Prostate gland (tissue), 2 donors: ENCODE measurements at regions of chrX and their contacts with region 1.

Region 1: GRCh38 chrX:9475984-9476383 is 11.1 kb downstream of the TBL1X start:
- DNase-seq: no peak
- H3K4me3 ChIP-seq: no peak overlapping the region
- H3K27ac ChIP-seq: no peak overlapping the region
- H3K4me1 ChIP-seq: no peaks in the 10 kb centered on the region
- H3K27me3 ChIP-seq: no peaks in the 10 kb centered on the region
- CTCF ChIP-seq: no peak
- POLR2A ChIP-seq: no peak

Region 2: DNA sequence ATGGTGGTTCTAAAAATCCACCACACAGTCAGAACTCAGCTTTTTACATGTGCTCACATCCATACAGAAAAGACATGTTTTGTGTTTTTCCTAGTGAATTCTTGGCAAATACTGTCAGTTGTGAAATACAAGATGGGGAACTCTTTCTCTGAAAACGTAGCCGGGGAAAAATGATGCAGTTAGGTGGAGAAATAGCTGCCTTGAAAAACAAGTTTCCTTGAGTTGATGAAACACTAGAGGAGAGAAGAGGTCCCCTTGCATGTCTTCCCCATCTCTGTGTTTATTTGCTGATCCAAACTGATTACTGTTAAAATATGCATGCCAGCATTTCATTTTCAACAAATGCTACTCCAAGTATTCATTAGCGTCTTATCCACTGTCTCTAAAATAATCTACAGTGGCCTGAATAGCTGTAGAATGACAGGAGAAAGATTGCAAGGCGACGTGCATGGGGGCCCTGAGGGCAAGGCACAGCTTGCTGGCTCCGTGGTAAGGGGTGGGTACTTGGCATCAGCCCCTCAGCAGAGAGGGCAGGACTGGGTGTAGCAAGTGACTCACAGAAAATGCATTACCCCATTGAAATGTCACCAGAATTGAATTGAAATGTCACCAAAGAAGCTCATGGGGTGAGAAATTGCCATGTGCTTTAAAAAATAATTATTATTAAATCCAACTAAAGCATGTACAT is 59.2 kb before region 1 on chrX:
- intact Hi-C with region 1: no loop called
- DNase-seq: no peak
- H3K4me3 ChIP-seq: no peak overlapping the region
- H3K27ac ChIP-seq: no peak overlapping the region
- H3K4me1 ChIP-seq: no peaks in the 10 kb centered on the region
- H3K27me3 ChIP-seq: no peaks in the 10 kb centered on the region
- CTCF ChIP-seq: no peak
- POLR2A ChIP-seq: no peak

Region 3: DNA sequence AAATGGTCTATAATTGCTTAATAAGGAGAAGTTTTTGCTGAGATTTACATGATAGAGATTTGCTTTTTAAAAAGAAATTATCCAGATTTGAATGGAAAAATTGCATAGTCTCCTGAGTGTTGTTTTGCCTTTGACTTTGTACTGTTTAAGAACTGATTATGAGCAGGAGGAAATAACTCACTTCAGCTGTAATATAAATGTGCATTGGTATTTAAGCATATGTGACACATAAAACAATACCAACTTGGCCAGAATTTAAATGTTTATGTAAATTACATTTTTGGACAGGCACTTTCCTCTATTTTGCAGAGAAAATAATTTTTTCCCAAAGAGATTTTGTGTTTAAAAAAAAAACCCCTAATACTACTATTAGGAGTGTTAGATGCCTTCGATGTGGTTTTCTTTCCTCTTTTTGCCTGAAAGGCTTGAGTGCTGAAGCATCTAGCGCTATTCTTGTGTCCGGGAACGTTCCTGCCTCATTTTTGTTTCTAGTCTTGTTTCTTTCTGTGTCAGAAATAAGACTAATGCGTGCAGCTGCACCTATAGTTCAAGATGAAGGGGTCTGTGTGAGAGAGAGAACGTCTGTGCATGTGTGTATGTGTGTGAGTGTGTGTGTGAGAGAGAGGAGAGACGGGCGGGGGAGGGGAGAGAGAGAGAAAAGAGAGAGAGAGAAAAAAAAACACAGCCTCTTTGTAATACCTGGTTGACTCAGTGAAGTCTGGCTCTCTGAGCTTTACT is 49.7 kb after region 1 on chrX:
- intact Hi-C with region 1: loop called (anchors 10 kb)
- DNase-seq: no peak
- H3K4me3 ChIP-seq: no peak overlapping the region
- H3K27ac ChIP-seq: no peak overlapping the region
- H3K4me1 ChIP-seq: no peaks in the 10 kb centered on the region
- H3K27me3 ChIP-seq: no peaks in the 10 kb centered on the region
- CTCF ChIP-seq: no peak
- POLR2A ChIP-seq: no peak

Region 4: DNA sequence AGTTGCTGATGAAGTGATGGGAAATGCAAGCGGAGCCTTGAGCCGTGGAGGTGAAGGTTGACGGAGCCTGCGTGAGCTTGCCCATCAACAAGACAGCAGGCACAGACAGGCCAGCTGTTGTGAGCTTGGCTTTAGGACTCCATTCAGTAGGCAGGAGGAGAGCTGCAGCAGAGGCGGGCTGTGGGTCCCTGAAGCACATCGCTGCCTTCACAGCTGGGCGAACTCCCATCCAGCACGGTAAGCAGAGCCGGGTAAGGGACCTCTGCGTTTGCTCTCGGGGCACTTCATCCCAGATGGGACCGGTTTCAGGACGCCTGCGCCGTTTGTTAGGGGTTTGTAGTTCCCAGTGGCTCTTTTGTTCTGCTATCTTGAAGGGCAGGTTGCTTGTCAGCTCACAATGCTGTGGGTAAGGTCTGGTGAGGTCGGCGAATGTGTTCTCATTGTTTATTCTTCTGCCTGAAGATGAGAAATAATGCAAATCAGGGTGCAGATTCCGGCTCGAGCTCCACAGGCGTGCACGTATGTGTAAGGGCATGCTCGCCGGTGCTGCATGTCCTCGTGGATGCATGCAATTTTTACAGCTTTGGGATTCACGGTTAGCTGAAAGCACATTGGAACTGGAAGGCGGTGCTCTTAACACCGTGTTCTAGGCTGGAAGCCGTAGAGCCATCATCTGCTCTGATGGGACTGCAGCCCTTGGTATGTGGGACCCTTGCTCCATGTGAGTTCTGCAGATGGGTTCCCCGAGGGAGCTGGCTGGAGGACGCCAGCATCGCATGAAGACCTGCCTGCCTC is 436.6 kb after region 1 on chrX:
- intact Hi-C with region 1: no loop called
- DNase-seq: peak; percentile 27
- H3K4me3 ChIP-seq: no peak overlapping the region
- H3K27ac ChIP-seq: no peak overlapping the region
- H3K4me1 ChIP-seq: no peaks in the 10 kb centered on the region
- H3K27me3 ChIP-seq: no peaks in the 10 kb centered on the region
- CTCF ChIP-seq: no peak
- POLR2A ChIP-seq: no peak